Panc1 (cell line): ENCODE measurements at regions of chr21 and their contacts with region 1.

Region 1: DNA sequence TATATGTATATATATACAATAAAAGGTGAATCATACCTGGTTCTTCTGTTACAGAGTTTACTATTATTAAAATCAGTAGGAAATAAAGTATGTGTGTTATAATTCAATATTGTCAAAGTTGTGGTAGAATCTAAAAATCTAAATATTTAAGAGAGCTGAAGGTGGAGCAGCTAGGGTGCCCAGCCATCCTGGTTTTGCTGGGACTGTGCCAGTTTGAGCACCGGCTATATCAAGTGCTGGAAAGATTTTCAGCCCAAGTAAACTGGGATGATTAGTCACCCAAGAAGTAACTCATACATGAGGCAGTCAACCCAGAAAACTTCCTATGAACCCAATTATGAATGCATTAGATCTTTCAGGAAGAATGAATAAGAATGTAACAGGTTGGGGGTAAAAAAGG is 16.9 kb upstream of the KRTAP19-5 start:
- DNase-seq: no peak
- ATAC-seq: no peak
- H3K4me3 ChIP-seq: no peak overlapping the region
- H3K27ac ChIP-seq: no peak overlapping the region
- H3K4me1 ChIP-seq: no peaks in the 10 kb centered on the region
- H3K27me3 ChIP-seq: no peaks in the 10 kb centered on the region
- CTCF ChIP-seq: no peak

Region 2: DNA sequence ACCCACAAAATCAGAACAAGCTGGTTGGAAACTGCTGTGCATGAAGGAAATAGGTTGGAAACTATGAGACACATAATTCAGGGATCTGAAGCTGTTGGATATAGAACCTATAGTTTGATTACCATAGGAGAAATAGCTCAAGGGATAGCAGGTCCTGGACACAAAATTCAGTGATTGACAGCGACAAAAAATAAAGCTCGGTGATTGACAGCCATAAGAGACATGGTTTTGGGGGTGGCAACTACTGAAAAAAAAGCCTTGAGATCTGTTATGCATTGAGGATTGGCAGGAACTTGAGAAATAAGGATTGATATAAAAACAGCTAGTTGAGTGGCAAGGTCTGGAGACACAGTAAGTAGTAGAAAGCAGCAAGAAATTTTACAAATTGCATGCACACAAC is 229.7 kb before region 1 on chr21 and contains the start of gene KRTAP25-1:
- CTCF ChIA-PET with region 1: interaction called, 12 read pairs
- POLR2A ChIA-PET with region 1: no interaction called
- in situ Hi-C with region 1: no loop called
- intact Hi-C with region 1: no loop called
- DNase-seq: no peak
- ATAC-seq: no peak
- H3K4me3 ChIP-seq: no peak within 1 kb of the TSS
- H3K27ac ChIP-seq: no peak within 1 kb of the TSS
- H3K4me1 ChIP-seq: no peaks in the 10 kb centered on the region
- H3K27me3 ChIP-seq: no peaks in the 10 kb centered on the region
- CTCF ChIP-seq: no peak
- total RNA-seq, gene KRTAP25-1: not detected

Region 3: DNA sequence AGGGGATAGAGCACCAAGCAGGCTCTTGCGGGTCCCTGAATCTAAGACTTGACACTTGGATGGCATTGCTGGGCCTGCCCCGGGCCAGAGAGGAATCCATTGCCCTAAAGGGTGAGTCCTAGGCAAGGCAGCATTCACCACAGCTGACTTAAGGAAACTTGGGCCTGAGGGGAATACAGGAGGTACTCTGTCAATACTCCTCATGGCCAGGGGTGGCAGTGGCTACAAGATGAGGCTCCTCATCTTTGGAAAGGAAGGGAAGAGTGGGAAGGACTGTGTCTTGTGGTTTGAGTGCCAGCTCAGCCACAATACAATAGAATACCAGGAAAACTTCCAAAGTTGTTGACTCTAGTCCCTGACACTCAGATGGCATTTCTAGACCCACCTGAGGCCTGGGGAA is 87.1 kb after region 1 on chr21:
- CTCF ChIA-PET with region 1: no interaction called
- POLR2A ChIA-PET with region 1: no interaction called
- in situ Hi-C with region 1: no loop called
- intact Hi-C with region 1: no loop called
- DNase-seq: no peak
- ATAC-seq: no peak
- H3K4me3 ChIP-seq: no peak overlapping the region
- H3K27ac ChIP-seq: no peak overlapping the region
- H3K4me1 ChIP-seq: no peaks in the 10 kb centered on the region
- H3K27me3 ChIP-seq: no peaks in the 10 kb centered on the region
- CTCF ChIP-seq: no peak